ENCODE measurements at regions of chr1 and their contacts with region 1.

Region 1: DNA sequence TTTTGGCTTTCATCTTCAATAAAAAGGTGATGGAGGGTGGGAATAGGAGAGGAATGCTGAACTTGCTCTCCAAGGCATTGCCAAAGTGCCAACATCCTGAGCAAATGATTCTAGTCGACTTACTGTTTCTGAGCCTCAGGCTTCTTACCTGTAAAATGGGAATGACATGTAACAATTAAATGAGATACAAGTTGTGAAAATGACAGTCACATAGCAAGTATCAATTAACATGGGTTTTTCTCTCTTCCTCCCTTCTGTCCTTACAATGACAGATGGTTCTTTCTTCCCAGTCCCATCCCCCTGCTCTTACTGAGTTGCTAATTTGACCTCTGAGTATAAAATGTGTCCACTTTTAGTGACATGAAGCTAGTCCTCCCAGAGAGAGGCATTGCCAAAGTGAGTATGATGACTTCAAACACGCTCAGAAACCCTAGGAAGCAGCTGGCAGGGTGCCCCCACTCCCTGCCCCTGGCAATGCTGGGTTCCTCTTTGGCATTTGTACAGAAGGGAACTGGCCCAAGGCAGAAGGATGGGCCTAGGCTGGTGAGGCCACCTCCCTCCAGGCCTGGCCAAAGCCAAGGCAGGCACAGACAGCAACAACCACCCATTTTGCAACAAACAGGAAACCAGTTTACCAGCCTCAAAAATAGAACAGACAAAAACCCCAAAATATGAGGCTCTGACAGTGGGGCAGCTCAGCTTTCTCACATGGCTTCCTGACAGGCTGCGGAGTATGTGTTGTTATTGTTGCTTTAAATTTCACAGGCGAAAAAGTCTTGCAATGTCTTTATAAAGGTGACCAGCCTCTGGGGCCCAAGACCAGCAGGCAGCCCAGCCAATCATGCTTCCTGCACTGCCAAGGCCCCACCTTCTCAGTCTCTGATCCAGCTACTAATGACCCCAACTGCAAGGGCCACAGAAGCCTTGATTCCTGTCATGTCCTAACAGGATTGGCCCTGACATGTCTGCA is 115.9 kb downstream of the HIVEP3 start:
- DNase-seq: peak in 3 of 4 donors; percentile 31 to 72 (median 37)
- ATAC-seq: peak; percentile 9
- H3K4me3 ChIP-seq: no peak overlapping the region
- H3K27ac ChIP-seq: peak overlapping the region in 1 of 4 donors; percentile 2
- H3K4me1 ChIP-seq: peaks cover 5% of the 10 kb centered on the region
- H3K27me3 ChIP-seq: no peaks in the 10 kb centered on the region
- CTCF ChIP-seq: no peak
- POLR2A ChIP-seq: no peak

Region 2: DNA sequence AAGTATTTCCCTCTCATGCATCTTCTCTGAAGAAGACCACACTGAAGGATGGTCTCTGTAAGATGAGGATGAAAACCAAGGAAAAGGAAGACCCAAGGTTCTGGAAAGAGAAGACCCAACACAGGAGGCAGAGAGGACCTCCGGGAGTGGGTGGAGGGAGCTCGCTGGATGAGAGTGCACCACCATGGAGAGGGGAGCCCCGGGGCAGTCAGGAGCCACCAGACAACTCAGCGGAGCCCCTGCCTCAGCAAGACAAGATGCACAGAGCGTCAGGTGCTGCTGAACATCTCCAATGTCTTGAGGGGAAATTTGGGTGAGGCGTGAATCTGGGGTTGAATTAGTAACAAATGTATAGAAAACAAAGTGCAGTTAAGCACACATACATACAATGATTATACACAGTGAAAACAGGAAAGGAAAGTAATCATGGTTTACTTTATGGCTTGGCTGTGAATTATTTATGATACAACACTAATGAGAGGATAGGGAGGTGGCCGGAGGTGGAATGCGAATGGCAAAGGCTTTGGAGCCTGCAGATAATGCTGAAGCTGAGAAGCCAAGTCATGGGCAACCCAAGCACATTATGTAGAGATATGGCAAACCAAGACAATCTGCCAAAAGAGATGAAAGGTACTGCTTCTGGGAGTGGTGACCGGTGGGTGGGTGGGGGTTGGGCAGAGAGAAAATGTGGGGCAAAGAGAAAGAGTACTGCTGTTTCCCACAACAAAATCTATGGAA is 237.9 kb before region 1 on chr1:
- intact Hi-C with region 1: loop called (anchors 10 kb)
- DNase-seq: no peak
- ATAC-seq: no peak
- H3K4me3 ChIP-seq: no peak overlapping the region
- H3K27ac ChIP-seq: no peak overlapping the region
- H3K4me1 ChIP-seq: no peaks in the 10 kb centered on the region
- H3K27me3 ChIP-seq: no peaks in the 10 kb centered on the region
- CTCF ChIP-seq: no peak
- POLR2A ChIP-seq: no peak

Region 3: GRCh38 chr1:42142894-42143675 is 340.3 kb after region 1 on chr1:
- intact Hi-C with region 1: no loop called
- DNase-seq: no peak
- ATAC-seq: no peak
- H3K4me3 ChIP-seq: no peak overlapping the region
- H3K27ac ChIP-seq: no peak overlapping the region
- H3K4me1 ChIP-seq: peaks cover 12% of the 10 kb centered on the region
- H3K27me3 ChIP-seq: no peaks in the 10 kb centered on the region
- CTCF ChIP-seq: no peak
- POLR2A ChIP-seq: no peak